Sigmoid colon (tissue), 7 donors: ENCODE measurements at regions of chr1 and their contacts with region 1.

Region 1: DNA sequence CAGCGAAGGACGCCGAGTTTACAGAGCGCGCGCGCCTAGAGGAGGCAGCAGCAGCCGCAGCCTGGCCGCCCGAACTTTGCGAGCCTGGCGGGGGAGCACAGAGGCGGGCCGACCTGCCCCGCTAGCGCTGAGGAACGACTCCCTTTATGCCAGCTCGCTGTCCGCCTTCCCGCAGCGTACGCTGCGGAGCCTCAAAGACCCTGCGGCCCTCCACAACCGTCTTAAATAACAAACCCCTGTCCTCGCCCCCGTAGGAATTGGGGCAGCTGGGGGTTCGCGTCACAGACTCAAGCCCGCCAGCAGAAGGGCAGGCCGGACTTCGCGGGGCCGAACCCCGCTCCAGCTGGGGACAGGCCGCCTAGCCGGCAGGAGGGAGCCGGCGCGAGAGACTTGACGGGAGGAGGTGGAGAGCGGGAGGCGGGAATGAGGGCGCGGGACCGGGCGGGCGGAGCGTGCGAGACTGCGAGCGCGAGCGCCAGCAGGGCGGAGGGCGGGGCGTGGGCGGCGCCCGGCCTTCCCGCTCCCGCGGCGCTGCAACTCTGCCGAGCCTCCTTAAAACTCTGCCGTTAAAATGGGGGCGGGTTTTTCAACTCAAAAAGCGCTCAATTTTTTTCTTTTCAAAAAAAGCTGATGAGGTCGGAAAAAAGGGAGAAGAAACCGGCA is 1.8 kb upstream of the CDKN2C start:
- DNase-seq: peak; percentile 95
- H3K4me3 ChIP-seq: peak overlapping the region; percentile 56 to 81 (median 73)
- H3K27ac ChIP-seq: peak overlapping the region; percentile 91 to 98 (median 96)
- H3K4me1 ChIP-seq: peaks cover 0 to 20% (median 11%) of the 10 kb centered on the region in 4 donors
- H3K27me3 ChIP-seq: no peaks in the 10 kb centered on the region
- CTCF ChIP-seq: peak; percentile 13 to 61 (median 50)
- EP300 ChIP-seq: no peak
- POLR2A ChIP-seq: peak; percentile 80 to 82

Region 2: DNA sequence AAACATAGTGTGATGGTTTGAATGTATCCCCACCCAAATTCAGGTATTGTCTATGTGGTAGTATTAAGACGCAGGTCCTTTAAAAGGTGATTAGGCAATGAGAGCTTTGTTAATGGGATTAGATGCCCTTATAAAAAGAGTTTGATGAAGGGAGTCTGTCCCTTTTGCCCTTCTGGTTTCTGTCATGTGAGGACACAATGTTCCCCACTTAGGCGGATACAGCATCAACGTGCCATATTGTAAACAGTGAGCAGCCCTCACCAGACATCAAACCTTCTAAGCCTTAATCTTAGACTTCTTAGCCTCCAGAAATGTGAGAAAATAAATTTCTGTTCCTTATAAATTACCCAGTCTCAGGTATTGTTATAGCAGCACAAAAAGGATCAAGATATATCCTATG is 181.0 kb before region 1 on chr1:
- intact Hi-C with region 1: loop called (anchors 5 kb)
- DNase-seq: no peak
- H3K4me3 ChIP-seq: no peak overlapping the region
- H3K27ac ChIP-seq: peak overlapping the region in 3 of 4 donors; percentile 27 to 57 (median 30)
- H3K4me1 ChIP-seq: peaks cover 0 to 17% (median 9%) of the 10 kb centered on the region in 4 donors
- H3K27me3 ChIP-seq: no peaks in the 10 kb centered on the region
- CTCF ChIP-seq: no peak
- EP300 ChIP-seq: peak in 3 of 4 donors; percentile 50 to 97 (median 86)
- POLR2A ChIP-seq: no peak

Region 3: DNA sequence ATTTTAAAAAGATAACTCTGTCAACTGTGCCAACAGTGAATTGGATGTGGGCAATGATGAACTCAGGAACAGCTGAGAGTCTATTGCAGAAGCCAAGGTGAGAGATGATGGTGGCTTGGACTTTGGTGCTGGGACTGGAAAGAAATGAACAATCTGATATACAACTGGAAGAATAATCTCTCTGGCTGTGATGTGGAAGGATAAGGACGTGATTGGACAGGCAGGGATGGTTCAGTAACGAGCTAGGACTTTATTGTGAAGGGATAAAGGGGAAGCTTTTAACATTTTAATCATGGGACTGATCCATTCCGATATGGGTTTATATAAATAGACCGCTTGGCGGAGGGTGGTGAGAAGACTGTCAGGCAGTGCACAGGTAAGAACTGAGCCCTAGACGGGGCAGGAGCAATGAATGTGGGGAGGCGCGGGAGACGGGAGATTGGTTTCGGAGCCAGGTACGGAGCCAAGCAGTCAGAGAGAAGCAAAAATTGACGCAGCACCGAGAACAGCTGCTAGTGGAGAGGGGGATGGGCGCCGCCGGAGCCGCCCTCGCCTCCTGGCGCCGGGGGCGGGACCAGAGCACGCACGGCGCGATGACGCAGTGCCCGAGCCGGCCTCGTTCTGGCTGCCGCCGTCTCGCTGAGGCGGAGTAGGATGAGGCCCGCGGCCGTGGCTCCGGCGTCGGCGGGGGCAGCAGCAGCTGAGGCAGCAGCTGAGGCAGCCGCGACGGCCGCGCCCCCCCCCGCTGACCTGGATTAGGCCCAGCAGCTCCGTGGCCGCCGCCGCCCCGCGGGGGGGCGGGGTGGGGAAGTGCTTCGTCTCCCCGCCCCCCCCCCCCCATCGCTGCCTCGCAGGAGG is 267.6 kb after region 1 on chr1 and contains the start of gene RNF11:
- intact Hi-C with region 1: loop called (anchors 5 kb)
- DNase-seq: peak; percentile 97
- H3K4me3 ChIP-seq: peak within 1 kb of the TSS; percentile 76 to 100 (median 88)
- H3K27ac ChIP-seq: peak within 1 kb of the TSS; percentile 93 to 98 (median 96)
- H3K4me1 ChIP-seq: peaks cover 0 to 43% (median 40%) of the 10 kb centered on the region in 4 donors
- H3K27me3 ChIP-seq: no peaks in the 10 kb centered on the region
- CTCF ChIP-seq: no peak
- EP300 ChIP-seq: peak in 2 of 4 donors; percentile 7 to 47
- POLR2A ChIP-seq: peak; percentile 72 to 75
- total RNA-seq, gene RNF11: 85.8 to 116 (median 101) TPM